ENCODE measurements at regions of chr11 and their contacts with region 1.

Region 1: GRCh38 chr11:36672813-36673450 is 74.9 kb upstream of the RAG2 start:
- DNase-seq: peak in 2 of 5 donors; percentile 22 to 36
- H3K4me3 ChIP-seq: no peak overlapping the region
- H3K27ac ChIP-seq: no peak overlapping the region
- H3K4me1 ChIP-seq: no peaks in the 10 kb centered on the region
- H3K27me3 ChIP-seq: no peaks in the 10 kb centered on the region
- CTCF ChIP-seq: peak; percentile 72

Region 2: GRCh38 chr11:36564376-36565030 is 108.4 kb before region 1 on chr11:
- intact Hi-C with region 1: loop called (anchors 10 kb)
- DNase-seq: peak in 4 of 5 donors; percentile 55 to 95 (median 82)
- H3K4me3 ChIP-seq: peak overlapping the region; percentile 50 to 58 (median 57)
- H3K27ac ChIP-seq: no peak overlapping the region
- H3K4me1 ChIP-seq: no peaks in the 10 kb centered on the region
- H3K27me3 ChIP-seq: no peaks in the 10 kb centered on the region
- CTCF ChIP-seq: peak; percentile 81

Measured in kidney (tissue), 22 donors.